Stomach (tissue), 19 donors: ENCODE measurements at regions of chr2 and their contacts with region 1.

Region 1: DNA sequence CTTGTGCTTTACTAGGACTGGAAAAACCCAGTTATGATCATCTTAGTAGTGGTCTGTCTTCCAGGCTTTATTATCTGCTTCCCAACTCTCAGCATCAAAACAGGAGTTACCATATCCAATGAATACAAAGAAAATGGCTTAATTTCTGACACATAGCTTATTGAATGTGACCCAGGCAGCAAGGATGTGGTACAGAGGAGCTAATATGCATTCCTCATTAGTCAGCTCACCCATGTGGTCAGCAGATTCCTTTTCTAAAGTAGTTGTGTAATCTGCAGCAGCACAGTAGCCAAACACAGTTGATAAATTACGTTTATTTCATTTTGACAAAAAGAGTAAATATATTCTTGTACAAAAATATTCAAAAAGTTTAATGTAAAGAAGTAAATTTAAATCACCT is 43.6 kb downstream of the TSPYL6 start:
- DNase-seq: peak in 1 of 2 donors; percentile 38
- H3K4me3 ChIP-seq: no peak overlapping the region
- H3K27ac ChIP-seq: no peak overlapping the region
- H3K4me1 ChIP-seq: peaks cover 0 to 24% (median 10%) of the 10 kb centered on the region in 4 donors
- H3K27me3 ChIP-seq: no peaks in the 10 kb centered on the region
- CTCF ChIP-seq: no peak
- EP300 ChIP-seq: no peak
- POLR2A ChIP-seq: no peak

Region 2: DNA sequence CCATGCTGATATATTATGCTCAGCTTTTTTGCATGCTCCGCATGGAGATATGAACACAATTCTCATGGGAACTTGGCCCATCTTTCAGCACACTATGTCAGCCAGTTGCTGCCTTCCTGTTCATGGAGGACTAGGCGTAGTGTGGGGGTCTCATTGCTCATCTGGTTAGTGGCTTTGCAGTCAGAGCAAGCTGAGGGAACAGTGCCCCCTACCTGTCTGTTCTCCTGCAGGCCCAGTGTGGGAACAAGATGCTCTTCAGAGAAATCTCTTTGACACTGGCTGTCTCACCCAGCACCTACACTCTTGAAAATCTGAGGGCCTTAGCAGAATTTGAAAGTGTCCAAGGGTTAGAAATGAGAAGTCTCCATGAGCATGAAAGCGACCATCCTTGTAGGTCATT is 290.7 kb after region 1 on chr2:
- intact Hi-C with region 1: loop called (anchors 10 kb)
- DNase-seq: peak in 1 of 2 donors; percentile 67
- H3K4me3 ChIP-seq: no peak overlapping the region
- H3K27ac ChIP-seq: peak overlapping the region in 1 of 5 donors; percentile 0
- H3K4me1 ChIP-seq: peaks cover 14 to 81% (median 52%) of the 10 kb centered on the region in 4 donors
- H3K27me3 ChIP-seq: no peaks in the 10 kb centered on the region
- CTCF ChIP-seq: peak in 3 of 7 experiments; percentile 20 to 39 (median 28)
- EP300 ChIP-seq: no peak
- POLR2A ChIP-seq: no peak